Activated naive CD4-positive, alpha-beta T cell treated with anti-CD3 and anti-CD28 coated beads, Interleukin-2, amount 10 ng/mL, durations not matched to agents 7 days and 5 days (primary cell): ENCODE measurements at regions of chr19 and their contacts with region 1.

Region 1: GRCh38 chr19:41959056-41960053 is at the start of gene RABAC1:
- DNase-seq: peak; percentile 95
- H3K4me3 Mint-ChIP-seq: peak within 1 kb of the TSS; percentile 86
- H3K27ac Mint-ChIP-seq: peak within 1 kb of the TSS; percentile 85
- H3K4me1 Mint-ChIP-seq: peaks cover 27% of the 10 kb centered on the region
- H3K27me3 Mint-ChIP-seq: no peaks in the 10 kb centered on the region

Region 2: GRCh38 chr19:41859618-41860418 is 99.5 kb before region 1 on chr19 and contains the start of gene RPS19:
- CTCF ChIA-PET with region 1: interaction called, 19 read pairs
- DNase-seq: peak; percentile 98
- H3K4me3 Mint-ChIP-seq: peak within 1 kb of the TSS; percentile 82
- H3K27ac Mint-ChIP-seq: peak within 1 kb of the TSS; percentile 92
- H3K4me1 Mint-ChIP-seq: peaks cover 46% of the 10 kb centered on the region
- H3K27me3 Mint-ChIP-seq: peaks cover 4% of the 10 kb centered on the region

Region 3: DNA sequence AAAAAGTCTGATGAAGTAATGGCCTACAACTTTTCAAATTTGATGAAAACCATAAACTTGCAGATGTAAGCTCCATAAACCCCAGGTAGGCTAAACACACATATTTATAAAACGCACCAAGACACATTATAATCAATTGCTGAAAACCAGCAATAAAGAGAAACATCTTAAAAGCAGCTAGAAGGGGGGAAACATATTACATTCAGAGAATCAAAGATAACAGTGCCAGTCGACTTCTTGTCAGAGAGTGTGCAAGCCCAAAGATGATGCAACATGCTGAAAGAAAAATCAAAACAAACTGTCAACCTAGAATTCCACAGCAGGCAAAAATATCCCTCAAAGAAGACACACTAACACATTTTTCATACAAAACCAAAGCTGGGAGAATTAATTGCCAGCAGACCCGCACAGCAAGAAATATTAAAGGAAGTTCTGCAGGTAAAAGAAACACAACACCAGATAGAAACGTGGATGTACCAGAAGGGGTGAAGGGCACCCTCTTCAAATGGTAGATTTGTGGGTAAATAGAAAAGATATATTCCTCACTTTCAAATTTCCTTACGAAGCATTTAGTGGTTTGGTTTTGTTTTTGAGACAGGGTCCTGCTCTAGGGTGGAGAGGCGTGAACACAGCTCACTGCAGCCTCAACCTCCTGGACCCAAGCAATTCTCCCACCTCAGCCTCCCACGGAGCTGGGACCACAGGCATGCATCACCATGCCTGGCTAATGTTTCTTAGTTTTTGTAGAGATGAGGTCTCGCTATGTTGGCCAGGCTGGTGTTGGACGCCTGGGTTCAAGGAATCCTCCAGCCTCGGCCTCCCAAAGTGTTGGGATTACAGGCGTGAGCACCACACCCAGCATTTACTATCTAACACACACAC is 51.1 kb after region 1 on chr19:
- CTCF ChIA-PET with region 1: no interaction called
- DNase-seq: no peak
- H3K4me3 Mint-ChIP-seq: no peak overlapping the region
- H3K27ac Mint-ChIP-seq: no peak overlapping the region
- H3K4me1 Mint-ChIP-seq: no peaks in the 10 kb centered on the region
- H3K27me3 Mint-ChIP-seq: peaks cover 5% of the 10 kb centered on the region